ENCODE measurements at regions of chr11 and their contacts with region 1.

Region 1: GRCh38 chr11:75445315-75445953 is 12.4 kb upstream of the KLHL35 start:
- DNase-seq: peak; percentile 92
- H3K4me3 ChIP-seq: peak overlapping the region in 1 of 2 experiments; percentile 9; a peak in 1 of 4 replicates
- H3K27ac ChIP-seq: no peak overlapping the region
- H3K4me1 ChIP-seq: peaks cover 0 to 2% of the 10 kb centered on the region in 2 experiments; a peak in 1 of 4 replicates
- H3K27me3 ChIP-seq: no peaks in the 10 kb centered on the region
- CTCF ChIP-seq: peak; percentile 94
- EP300 ChIP-seq: no peak
- RAD21 ChIP-seq: peak; percentile 100

Region 2: GRCh38 chr11:75406338-75406777 is 39.1 kb before region 1 on chr11:
- CTCF ChIA-PET with region 1: interaction called, 11 read pairs
- POLR2A ChIA-PET with region 1: no interaction called
- DNase-seq: peak; percentile 61
- H3K4me3 ChIP-seq: no peak overlapping the region
- H3K27ac ChIP-seq: peak overlapping the region; percentile 3 to 74; a peak in 3 of 4 replicates
- H3K4me1 ChIP-seq: peaks cover 22 to 43% of the 10 kb centered on the region in 2 experiments
- H3K27me3 ChIP-seq: no peaks in the 10 kb centered on the region
- CTCF ChIP-seq: no peak
- EP300 ChIP-seq: peak in 1 of 2 experiments; percentile 57; a peak in 1 of 4 replicates
- RAD21 ChIP-seq: no peak

Region 3: GRCh38 chr11:75428281-75428724 is 17.1 kb before region 1 on chr11:
- CTCF ChIA-PET with region 1: interaction called, 54 read pairs
- POLR2A ChIA-PET with region 1: interaction called, 3 read pairs
- DNase-seq: peak; percentile 99
- H3K4me3 ChIP-seq: peak overlapping the region; percentile 54 to 55; a peak in 3 of 4 replicates
- H3K27ac ChIP-seq: peak overlapping the region in 1 of 2 experiments; percentile 53; a peak in 1 of 4 replicates
- H3K4me1 ChIP-seq: peaks cover 0 to 21% of the 10 kb centered on the region in 2 experiments; a peak in 1 of 4 replicates
- H3K27me3 ChIP-seq: peaks cover 9% of the 10 kb centered on the region
- CTCF ChIP-seq: no peak
- EP300 ChIP-seq: no peak
- RAD21 ChIP-seq: no peak

Region 4: DNA sequence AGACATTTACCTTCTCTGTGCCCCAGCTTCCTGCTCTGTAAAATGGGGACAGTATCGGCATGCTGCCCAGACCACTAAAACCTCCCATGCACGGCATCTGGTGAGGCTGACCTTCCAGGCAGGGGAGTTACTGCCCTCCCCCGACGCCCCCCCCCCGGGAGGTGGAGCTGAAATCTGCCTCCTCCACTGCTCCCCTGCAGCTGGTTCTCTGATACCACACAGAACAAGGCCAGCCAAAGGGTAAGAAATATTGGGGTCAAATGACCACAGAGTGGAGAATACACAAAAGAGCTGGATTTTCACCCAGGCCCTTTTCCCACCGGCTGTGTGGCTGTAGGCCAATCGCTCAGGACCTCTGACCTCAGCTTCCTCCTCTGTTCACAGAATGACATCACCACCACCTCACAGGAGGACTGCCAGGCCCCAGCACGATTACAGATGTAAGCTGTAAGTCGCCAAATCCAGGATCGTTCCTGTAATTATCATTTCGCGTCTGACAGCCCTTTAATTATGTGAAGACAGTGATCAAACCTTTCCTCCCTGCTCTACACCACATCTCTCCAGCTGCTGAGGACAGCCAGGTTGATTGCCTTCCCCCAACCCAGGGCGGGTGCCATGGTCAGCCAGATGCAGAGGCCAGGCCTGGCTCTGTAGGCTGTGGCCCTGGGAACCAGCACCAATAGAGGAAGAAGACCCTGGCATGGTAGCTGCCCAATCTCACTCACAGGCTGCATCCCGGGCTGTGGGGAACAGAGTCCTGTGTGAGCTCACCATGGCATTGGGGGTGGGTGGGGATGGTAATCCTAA is 23.3 kb after region 1 on chr11:
- CTCF ChIA-PET with region 1: interaction called, 10 read pairs
- POLR2A ChIA-PET with region 1: no interaction called
- DNase-seq: peak; percentile 64
- H3K4me3 ChIP-seq: no peak overlapping the region
- H3K27ac ChIP-seq: no peak overlapping the region; a peak in 1 of 4 replicates
- H3K4me1 ChIP-seq: peaks cover 0 to 52% of the 10 kb centered on the region in 2 experiments; a peak in 3 of 4 replicates
- H3K27me3 ChIP-seq: no peaks in the 10 kb centered on the region
- CTCF ChIP-seq: no peak
- EP300 ChIP-seq: no peak
- RAD21 ChIP-seq: no peak

Region 5: GRCh38 chr11:75525596-75526541 is 80.4 kb after region 1 on chr11 and contains the start of gene GDPD5:
- CTCF ChIA-PET with region 1: interaction called, 275 read pairs
- POLR2A ChIA-PET with region 1: interaction called, 3 read pairs
- DNase-seq: peak; percentile 99
- H3K4me3 ChIP-seq: peak within 1 kb of the TSS; percentile 70 to 73
- H3K27ac ChIP-seq: peak within 1 kb of the TSS in 1 of 2 experiments; percentile 60; a peak in 1 of 4 replicates
- H3K4me1 ChIP-seq: peaks cover 0 to 25% of the 10 kb centered on the region in 2 experiments; a peak in 1 of 4 replicates
- H3K27me3 ChIP-seq: no peaks in the 10 kb centered on the region
- CTCF ChIP-seq: peak; percentile 53
- EP300 ChIP-seq: no peak
- RAD21 ChIP-seq: peak; percentile 44
- polyA plus RNA-seq, gene GDPD5: 1.6 and 2.2 TPM in 2 replicates

Measured in SK-N-SH (cell line).